ENCODE measurements at regions of chr2 and their contacts with region 1.

Region 1: DNA sequence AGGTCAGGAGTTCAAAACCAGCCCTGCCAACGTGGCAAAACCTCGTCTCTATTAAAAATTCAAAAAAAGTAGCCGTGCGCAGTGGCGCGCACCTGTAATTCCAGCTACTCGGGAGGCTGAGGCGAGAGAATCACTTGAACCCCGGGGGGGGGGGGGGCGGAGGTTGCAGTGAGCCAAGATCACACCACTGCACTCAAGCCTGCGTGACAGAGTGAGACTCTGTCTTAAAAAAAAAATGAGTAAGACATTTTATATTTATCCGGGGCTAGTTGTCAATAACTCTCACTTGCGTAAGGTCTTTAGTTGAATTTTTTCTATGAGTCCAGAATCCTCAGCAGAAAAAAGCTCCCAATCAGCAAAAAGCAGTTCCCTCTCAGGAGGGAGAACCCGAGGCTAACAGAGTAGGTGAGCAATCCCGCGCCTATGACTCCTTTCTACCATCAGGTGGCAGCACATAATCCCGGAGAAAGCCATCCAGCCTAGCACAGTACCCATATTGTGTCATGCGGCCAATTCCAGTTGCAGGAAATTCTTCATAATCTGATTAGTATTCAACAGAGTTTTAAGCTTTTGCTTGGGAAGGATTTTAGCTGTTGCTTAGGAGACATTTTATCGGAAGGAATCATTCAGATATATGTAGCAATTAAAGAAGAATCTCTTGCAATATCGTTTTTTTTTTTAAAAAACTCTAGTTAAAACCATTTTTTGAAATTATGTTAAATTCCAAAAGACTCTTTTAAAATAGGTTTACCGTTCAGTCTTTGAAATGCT is 11.9 kb upstream of the CRYGA start:
- DNase-seq: peak; percentile 70
- H3K4me3 Mint-ChIP-seq: no peak overlapping the region
- H3K27ac Mint-ChIP-seq: no peak overlapping the region
- H3K4me1 Mint-ChIP-seq: no peaks in the 10 kb centered on the region
- H3K27me3 Mint-ChIP-seq: peaks cover 15% of the 10 kb centered on the region

Region 2: DNA sequence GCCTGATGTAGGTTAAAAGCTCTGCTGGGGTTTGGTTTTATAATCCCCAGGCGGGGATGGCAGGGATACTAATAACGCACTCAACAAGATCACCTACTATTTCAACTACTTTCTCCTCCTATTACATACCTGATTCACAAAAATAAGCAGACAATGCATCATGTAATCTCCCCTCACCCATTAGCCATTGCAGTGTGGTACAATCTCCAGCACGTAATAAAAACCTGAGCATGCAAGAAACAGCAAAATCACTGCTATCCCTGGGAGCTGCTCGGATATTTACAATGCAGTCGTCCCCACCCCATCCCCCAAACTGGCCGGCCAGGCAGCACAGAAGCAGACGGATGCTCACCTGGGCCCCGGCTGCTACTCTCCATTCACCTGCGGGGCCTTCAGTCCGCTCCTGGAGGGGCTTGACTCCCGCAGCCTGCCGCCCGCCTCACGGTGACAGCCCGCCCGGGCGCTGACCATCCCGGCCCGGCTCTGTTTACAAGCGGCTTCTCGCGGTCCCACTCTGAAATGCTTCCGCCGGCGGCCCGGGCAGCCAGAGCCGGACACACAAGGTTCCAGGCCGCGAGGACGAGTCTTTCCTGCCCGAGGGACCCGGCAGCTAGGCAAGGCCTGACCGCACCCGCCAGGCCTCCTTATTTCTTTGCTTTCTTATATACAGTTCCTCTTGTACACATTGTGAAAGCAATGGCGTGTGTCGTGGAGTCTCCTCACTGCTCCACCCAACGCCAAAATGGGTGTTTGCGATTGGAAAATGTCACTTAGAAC is 150.0 kb before region 1 on chr2 and contains the start of gene PLEKHM3:
- CTCF ChIA-PET with region 1: no interaction called
- DNase-seq: peak; percentile 76
- H3K4me3 Mint-ChIP-seq: peak within 1 kb of the TSS; percentile 87
- H3K27ac Mint-ChIP-seq: peak within 1 kb of the TSS; percentile 85
- H3K4me1 Mint-ChIP-seq: peaks cover 16% of the 10 kb centered on the region
- H3K27me3 Mint-ChIP-seq: no peaks in the 10 kb centered on the region

Region 3: DNA sequence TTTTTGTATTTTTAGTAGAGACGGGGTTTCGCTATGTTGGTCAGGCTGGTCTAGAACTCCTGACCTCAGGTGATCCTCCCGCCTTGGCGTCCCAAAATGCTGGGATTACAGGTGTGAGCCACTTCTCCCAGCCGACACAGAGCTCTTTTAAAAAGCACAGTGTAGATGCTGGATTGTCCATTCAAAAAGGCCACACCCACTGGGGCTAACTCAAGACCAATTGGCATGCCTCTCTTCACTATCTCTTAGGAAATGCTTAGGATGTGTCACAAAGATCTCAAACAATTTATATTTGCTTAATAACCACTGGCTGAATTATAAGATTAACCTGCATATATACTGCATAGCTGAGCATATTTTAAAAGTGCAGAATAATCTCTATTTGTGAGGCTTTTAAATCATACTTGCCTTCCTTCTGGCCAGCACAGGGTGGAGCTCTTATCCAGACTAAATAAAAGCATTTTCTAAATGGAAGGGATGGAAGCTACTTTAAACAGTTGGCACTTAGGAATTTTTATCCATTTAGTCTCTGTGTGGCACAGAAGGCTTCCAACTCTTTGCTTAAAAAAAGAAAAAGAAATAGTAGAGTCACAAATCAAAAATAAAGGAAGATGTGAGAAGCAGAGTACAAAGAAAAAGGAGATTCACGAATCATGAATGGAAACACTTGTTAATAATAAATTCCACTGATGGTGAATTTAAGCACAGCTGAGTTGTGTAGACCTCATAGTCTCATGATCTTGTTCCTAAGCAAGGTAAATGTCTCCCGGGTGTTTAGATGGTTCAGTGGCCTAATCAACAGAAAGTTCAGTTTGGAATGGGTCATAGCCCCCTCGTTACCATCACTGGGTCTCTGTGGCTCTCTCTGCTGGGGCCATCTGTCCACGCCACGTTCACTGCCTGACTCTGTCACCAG is 73.3 kb before region 1 on chr2:
- CTCF ChIA-PET with region 1: interaction called, 10 read pairs
- DNase-seq: no peak
- H3K4me3 Mint-ChIP-seq: no peak overlapping the region
- H3K27ac Mint-ChIP-seq: no peak overlapping the region
- H3K4me1 Mint-ChIP-seq: peaks cover 18% of the 10 kb centered on the region
- H3K27me3 Mint-ChIP-seq: peaks cover 27% of the 10 kb centered on the region

Region 4: DNA sequence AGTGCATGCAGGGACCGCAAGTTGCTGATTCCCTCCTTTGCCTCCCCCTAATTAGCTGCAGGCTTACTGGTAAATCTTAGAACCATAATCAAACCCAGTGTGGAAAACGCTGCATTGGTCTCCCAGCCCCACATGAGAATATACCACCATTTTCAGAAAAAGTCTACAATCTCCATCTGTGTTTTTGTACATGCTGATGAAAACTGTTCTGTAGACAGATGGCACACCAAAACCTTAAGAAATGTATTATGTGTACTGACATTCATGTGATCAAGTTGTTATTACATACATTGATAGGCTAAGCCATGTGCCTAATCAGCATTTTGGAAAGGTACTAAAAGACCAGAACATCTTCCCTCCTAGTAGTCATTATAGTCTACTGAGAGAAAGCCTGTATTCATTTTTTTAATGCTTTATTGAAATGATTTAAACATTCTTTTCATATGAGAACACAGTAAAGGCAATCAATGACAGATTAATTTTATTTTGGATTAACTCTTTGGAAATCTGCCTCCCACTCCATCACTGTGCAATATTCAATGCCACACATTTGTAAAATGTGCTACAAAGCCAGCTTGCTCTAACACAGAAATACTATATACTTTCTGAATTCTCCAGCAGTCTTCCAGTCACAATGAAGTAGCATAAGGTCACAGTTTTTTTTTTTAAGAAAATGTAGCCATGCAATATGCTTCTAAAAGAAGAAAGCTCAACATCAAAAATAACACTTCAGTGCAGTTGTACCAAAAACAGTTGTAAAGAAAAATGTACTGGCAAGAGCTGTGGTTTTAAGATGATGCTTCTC is 10.1 kb before region 1 on chr2:
- CTCF ChIA-PET with region 1: interaction called, 13 read pairs
- DNase-seq: no peak
- H3K4me3 Mint-ChIP-seq: no peak overlapping the region
- H3K27ac Mint-ChIP-seq: no peak overlapping the region
- H3K4me1 Mint-ChIP-seq: no peaks in the 10 kb centered on the region
- H3K27me3 Mint-ChIP-seq: peaks cover 3% of the 10 kb centered on the region

Measured in activated naive CD4-positive, alpha-beta T cell treated with anti-CD3 and anti-CD28 coated beads, Interleukin-2, amount 10 ng/mL, durations not matched to agents 7 days and 5 days (primary cell).